Activated CD4-positive, alpha-beta memory T cell treated with anti-CD3 and anti-CD28 coated beads for 36 hours (primary cell): ENCODE measurements at regions of chr3 and their contacts with region 1.

Region 1: GRCh38 chr3:111616417-111617105 is 21.4 kb upstream of the ZBED2 start:
- DNase-seq: peak; percentile 89
- H3K4me3 Mint-ChIP-seq: peak overlapping the region; percentile 49
- H3K27ac Mint-ChIP-seq: peak overlapping the region; percentile 92
- H3K4me1 Mint-ChIP-seq: peaks cover 77% of the 10 kb centered on the region
- H3K27me3 Mint-ChIP-seq: no peaks in the 10 kb centered on the region

Region 2: GRCh38 chr3:110814170-110815007 is 802.2 kb before region 1 on chr3:
- CTCF ChIA-PET with region 1: no interaction called
- POLR2A ChIA-PET with region 1: no interaction called
- intact Hi-C with region 1: loop called (anchors 10 kb)
- DNase-seq: peak; percentile 81
- H3K4me3 Mint-ChIP-seq: peak overlapping the region; percentile 12
- H3K27ac Mint-ChIP-seq: peak overlapping the region; percentile 78
- H3K4me1 Mint-ChIP-seq: peaks cover 19% of the 10 kb centered on the region
- H3K27me3 Mint-ChIP-seq: peaks cover 15% of the 10 kb centered on the region

Region 3: DNA sequence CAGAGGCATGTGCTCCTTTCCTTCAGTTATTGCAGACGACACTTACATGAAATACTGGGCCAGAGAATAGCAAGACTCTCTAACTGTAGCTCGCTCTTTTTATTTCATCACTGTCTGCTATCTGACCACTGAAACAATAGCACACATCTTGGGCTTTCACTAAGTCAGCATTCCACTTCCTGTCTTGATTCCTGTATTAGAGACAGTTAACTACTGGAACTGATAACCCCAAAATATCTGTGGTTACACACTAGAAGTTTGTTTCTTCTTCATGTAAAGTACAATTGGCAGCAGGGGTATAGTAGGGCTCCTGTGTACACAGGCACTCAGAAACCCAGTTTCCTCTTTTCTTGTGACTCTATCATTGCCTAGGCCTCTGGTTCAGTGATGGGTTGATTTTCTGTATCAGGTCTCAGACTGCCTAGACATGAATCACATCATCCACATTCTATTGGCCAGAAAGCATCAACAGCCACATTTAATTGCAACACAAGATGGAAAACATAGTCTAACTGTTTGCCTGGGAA is 304.8 kb before region 1 on chr3:
- CTCF ChIA-PET with region 1: interaction called, 3 read pairs
- POLR2A ChIA-PET with region 1: no interaction called
- intact Hi-C with region 1: loop called (anchors 5 kb)
- DNase-seq: no peak
- H3K4me3 Mint-ChIP-seq: no peak overlapping the region
- H3K27ac Mint-ChIP-seq: peak overlapping the region; percentile 73
- H3K4me1 Mint-ChIP-seq: peaks cover 30% of the 10 kb centered on the region
- H3K27me3 Mint-ChIP-seq: no peaks in the 10 kb centered on the region

Region 4: DNA sequence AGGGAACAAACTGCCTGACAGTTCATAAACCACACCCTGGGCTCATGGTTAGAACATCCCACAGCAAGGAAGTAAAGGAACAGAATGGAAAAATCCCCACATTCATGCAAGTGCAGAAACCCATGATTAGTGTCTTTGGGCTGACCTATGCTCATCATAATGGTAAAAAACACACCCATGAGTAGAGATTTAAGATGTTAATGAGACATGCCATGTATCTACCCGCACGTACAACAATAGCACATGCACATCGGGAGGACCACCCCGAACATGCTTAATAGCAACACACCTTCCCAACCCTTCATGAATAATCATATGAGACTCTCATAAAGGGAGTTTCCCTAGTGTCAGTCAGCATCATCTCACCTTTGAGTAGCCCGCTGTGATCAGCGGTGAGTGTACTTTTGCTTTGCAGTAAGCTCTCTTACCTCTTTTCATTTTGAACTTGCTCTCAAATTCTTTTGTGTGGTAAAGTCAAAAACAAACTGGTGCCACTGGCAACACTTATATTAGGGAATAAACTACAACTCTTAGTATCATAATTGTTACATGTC is 44.6 kb before region 1 on chr3:
- CTCF ChIA-PET with region 1: interaction called, 128 read pairs
- POLR2A ChIA-PET with region 1: interaction called, 4 read pairs
- intact Hi-C with region 1: no loop called
- DNase-seq: peak; percentile 70
- H3K4me3 Mint-ChIP-seq: no peak overlapping the region
- H3K27ac Mint-ChIP-seq: peak overlapping the region; percentile 81
- H3K4me1 Mint-ChIP-seq: peaks cover 65% of the 10 kb centered on the region
- H3K27me3 Mint-ChIP-seq: no peaks in the 10 kb centered on the region

Region 5: GRCh38 chr3:111594205-111594604 is 22.4 kb before region 1 on chr3:
- CTCF ChIA-PET with region 1: interaction called, 80 read pairs
- POLR2A ChIA-PET with region 1: interaction called, 115 read pairs
- intact Hi-C with region 1: loop called (anchors 1 kb)
- DNase-seq: no peak
- H3K4me3 Mint-ChIP-seq: peak overlapping the region; percentile 86
- H3K27ac Mint-ChIP-seq: peak overlapping the region; percentile 97
- H3K4me1 Mint-ChIP-seq: peaks cover 57% of the 10 kb centered on the region
- H3K27me3 Mint-ChIP-seq: peaks cover 2% of the 10 kb centered on the region

Region 6: DNA sequence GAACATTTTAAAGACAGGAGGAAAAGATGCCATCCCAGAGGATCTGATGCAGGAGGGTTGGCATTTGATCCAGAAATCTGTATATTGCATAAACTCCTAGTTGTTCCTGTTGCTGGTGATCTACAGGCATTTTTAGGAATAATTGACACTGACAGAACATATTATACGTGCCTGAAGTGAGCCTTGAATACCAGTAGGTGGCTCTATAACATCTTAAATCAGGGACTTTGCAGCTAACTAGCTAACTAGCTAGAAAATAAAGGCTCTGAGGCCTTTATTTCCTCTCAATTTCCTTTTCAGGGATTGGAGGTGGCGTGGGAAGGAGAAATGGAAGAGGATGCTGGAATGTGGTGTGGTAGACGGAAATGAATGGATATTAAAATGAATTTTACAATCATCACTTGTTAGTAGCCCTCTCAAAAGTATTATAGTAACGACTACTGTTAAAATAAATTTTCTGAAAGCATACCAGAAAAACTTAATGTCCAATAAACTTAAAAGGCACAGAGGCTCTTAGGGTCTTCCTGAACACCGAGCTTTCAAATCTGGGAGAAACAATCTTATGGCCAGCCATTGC is 52.4 kb after region 1 on chr3:
- CTCF ChIA-PET with region 1: interaction called, 16 read pairs
- POLR2A ChIA-PET with region 1: interaction called, 5 read pairs
- intact Hi-C with region 1: loop called (anchors 1 kb)
- DNase-seq: no peak
- H3K4me3 Mint-ChIP-seq: no peak overlapping the region
- H3K27ac Mint-ChIP-seq: no peak overlapping the region
- H3K4me1 Mint-ChIP-seq: peaks cover 74% of the 10 kb centered on the region
- H3K27me3 Mint-ChIP-seq: no peaks in the 10 kb centered on the region

Region 7: DNA sequence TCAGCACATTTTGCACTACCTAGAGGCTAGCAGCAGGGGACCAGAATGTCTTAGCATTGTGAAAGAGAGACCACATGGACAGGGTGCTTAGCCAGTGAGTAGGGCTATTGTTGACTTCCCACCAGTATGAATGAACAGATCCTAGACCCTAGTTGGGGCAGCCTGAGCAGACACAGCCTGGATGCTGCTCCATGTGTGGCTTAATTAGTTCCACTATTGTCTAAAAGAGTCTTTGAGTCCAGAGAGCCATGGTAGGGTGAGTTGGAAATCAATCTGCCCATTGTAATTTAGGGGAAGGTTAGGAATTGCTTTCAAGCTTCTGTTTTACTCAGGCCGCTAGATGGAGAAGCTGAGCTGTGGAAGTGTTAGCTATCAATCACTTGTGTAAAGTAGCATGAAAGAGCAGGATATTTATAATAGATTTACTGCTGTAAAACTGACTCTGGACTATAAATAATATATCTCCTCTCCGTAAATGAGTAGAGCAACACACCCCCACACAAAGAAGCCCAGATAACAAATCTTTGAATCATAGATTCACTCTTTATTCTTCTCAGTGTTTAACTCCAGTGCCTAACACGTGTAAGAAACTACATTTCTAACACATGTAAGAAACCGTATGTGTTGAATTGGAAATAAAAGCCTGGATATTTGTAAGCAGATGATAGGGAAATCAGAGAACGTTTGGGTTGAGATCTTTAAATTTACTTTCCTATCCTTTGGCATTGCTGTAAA is 520.6 kb after region 1 on chr3:
- CTCF ChIA-PET with region 1: no interaction called
- POLR2A ChIA-PET with region 1: no interaction called
- intact Hi-C with region 1: loop called (anchors 5 kb)
- DNase-seq: peak; percentile 59
- H3K4me3 Mint-ChIP-seq: no peak overlapping the region
- H3K27ac Mint-ChIP-seq: no peak overlapping the region
- H3K4me1 Mint-ChIP-seq: peaks cover 70% of the 10 kb centered on the region
- H3K27me3 Mint-ChIP-seq: no peaks in the 10 kb centered on the region